ENCODE measurements at regions of chr11 and their contacts with region 1.

Region 1: GRCh38 chr11:60265373-60266214 is 14.9 kb upstream of the MS4A4A start:
- DNase-seq: peak; percentile 83
- H3K4me3 ChIP-seq: no peak overlapping the region
- H3K27ac ChIP-seq: no peak overlapping the region
- H3K4me1 ChIP-seq: no peaks in the 10 kb centered on the region
- H3K27me3 ChIP-seq: peaks cover 11 to 20% of the 10 kb centered on the region in 2 experiments
- CTCF ChIP-seq: peak; percentile 36 to 42
- POLR2A ChIP-seq: no peak

Region 2: DNA sequence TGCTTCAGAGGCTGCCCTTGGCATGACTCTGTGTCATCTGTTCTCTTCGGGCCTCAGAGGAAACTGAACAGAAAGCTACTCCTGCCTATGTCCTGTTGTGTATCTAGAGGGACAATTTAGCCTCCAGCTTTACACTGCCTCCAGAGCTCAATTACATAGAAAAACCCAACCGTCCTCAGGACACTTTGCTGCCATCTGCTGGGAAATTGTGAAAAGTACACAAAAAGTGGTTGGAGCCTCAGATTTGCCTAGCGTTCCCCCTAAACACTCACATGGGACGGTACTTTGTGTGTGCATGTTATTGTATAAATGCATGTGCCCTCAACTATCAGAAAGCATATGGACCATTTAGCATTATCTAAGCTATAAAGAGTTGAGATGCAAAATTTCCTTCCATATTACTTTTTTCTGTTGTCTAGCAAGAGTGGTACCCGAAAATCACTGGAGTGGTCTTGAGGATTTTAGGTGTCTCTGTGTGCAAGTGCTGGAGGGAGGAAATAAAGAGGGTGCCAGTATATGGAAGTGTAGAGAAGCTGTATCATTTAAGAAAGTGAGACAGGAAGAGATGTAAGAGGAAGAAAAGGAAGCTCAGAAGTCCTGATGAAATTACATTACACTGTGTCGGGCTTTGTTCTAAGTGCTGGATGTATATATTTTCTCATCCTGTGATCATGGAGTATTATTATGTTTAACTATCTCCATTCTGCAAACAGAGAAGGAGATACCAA is 13.9 kb before region 1 on chr11:
- CTCF ChIA-PET with region 1: interaction called, 45 read pairs
- POLR2A ChIA-PET with region 1: no interaction called
- dilution Hi-C with region 1: no loop called
- intact Hi-C with region 1: no loop called
- DNase-seq: peak; percentile 89
- H3K4me3 ChIP-seq: no peak overlapping the region
- H3K27ac ChIP-seq: no peak overlapping the region
- H3K4me1 ChIP-seq: peaks cover 22% of the 10 kb centered on the region
- H3K27me3 ChIP-seq: peaks cover 0 to 3% of the 10 kb centered on the region in 2 experiments
- CTCF ChIP-seq: peak; percentile 43 to 58
- POLR2A ChIP-seq: no peak

Region 3: DNA sequence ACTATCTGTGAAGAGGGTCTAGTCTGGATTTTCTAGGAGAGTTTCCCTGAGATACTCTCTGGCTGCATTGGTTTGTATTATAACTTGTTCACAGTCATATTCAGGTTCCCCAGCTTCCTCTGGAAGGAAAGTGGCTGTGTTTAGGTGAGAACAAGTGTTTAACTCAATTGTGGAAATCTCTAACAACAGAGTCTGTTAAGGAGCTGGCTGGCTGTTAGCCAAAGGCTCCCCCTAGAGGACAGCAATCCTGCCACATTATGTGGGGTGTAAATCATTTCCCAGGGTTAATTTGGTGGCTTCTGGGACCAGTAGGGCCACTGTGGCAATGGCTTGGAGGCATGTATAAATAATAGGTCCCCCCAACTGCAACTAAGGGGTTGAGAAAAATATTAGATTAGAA is 79.9 kb after region 1 on chr11:
- CTCF ChIA-PET with region 1: interaction called, 67 read pairs
- POLR2A ChIA-PET with region 1: no interaction called
- dilution Hi-C with region 1: no loop called
- intact Hi-C with region 1: loop called (anchors 1 kb)
- DNase-seq: peak; percentile 54
- H3K4me3 ChIP-seq: no peak overlapping the region
- H3K27ac ChIP-seq: no peak overlapping the region
- H3K4me1 ChIP-seq: no peaks in the 10 kb centered on the region
- H3K27me3 ChIP-seq: peaks cover 25 to 26% of the 10 kb centered on the region in 2 experiments
- CTCF ChIP-seq: peak; percentile 46 to 50
- POLR2A ChIP-seq: no peak

Region 4: DNA sequence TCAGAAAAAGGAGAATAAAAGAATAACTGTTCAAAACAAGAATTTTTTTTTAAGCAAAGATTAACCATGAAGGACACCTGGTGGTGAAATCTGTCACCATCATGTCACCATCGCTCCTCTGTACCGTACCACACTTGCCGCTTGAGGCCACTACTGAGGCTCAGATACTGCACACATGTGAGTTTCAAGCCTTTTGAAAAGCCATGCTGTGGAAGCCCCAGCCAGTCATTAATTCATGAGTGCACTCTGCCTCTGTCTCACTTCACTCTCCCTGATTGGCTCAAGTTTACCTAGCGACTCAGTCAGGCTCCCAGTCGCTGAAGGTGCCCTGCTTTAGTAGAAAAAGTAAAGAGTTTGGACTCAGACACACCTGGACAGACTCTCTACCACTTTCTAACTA is 220.4 kb after region 1 on chr11:
- CTCF ChIA-PET with region 1: no interaction called
- POLR2A ChIA-PET with region 1: no interaction called
- dilution Hi-C with region 1: no loop called
- intact Hi-C with region 1: loop called (anchors 5 kb)
- DNase-seq: peak; percentile 17
- H3K4me3 ChIP-seq: no peak overlapping the region
- H3K27ac ChIP-seq: no peak overlapping the region
- H3K4me1 ChIP-seq: no peaks in the 10 kb centered on the region
- H3K27me3 ChIP-seq: no peaks in the 10 kb centered on the region
- CTCF ChIP-seq: peak in 1 of 2 donors; percentile 37
- POLR2A ChIP-seq: no peak

Region 5: GRCh38 chr11:60634126-60634525 is 368.5 kb after region 1 on chr11:
- CTCF ChIA-PET with region 1: interaction called, 32 read pairs
- POLR2A ChIA-PET with region 1: no interaction called
- dilution Hi-C with region 1: no loop called
- intact Hi-C with region 1: loop called (anchors 1 kb)
- DNase-seq: peak; percentile 22
- H3K4me3 ChIP-seq: no peak overlapping the region
- H3K27ac ChIP-seq: no peak overlapping the region
- H3K4me1 ChIP-seq: no peaks in the 10 kb centered on the region
- H3K27me3 ChIP-seq: peaks cover 0 to 2% of the 10 kb centered on the region in 2 experiments
- CTCF ChIP-seq: peak; percentile 20 to 44
- POLR2A ChIP-seq: no peak